ENCODE measurements at regions of chr18 and their contacts with region 1.

Region 1: DNA sequence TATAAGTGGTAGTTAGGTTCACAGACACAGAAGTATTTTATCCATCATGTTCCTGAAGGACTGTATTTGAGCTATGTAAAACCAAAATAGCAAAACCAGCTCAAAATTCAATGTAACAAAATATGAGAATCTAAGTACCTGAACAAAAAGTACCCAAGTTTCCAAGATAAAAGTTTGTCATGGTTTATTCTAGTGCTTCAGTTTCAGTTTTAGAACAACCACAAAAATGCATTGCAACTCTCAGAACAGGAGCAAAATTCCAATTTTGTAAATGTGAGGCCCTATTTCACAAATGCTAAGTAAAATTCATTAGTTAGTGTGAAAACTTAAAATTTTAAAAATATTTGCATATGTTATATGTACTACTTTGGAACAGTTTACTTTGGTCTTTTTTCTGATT is 5.0 kb upstream of the ALPK2 start:
- DNase-seq: no peak
- H3K4me3 ChIP-seq: no peak overlapping the region
- H3K27ac ChIP-seq: no peak overlapping the region
- H3K4me1 ChIP-seq: peaks cover 27% of the 10 kb centered on the region
- H3K27me3 ChIP-seq: no peaks in the 10 kb centered on the region
- CTCF ChIP-seq: no peak

Region 2: GRCh38 chr18:58590839-58591238 is 43.0 kb before region 1 on chr18:
- CTCF ChIA-PET with region 1: interaction called, 10 read pairs
- POLR2A ChIA-PET with region 1: no interaction called
- intact Hi-C with region 1: no loop called
- DNase-seq: no peak
- H3K4me3 ChIP-seq: no peak overlapping the region
- H3K27ac ChIP-seq: no peak overlapping the region
- H3K4me1 ChIP-seq: no peaks in the 10 kb centered on the region; the same call in 1 of the 2 replicates
- H3K27me3 ChIP-seq: no peaks in the 10 kb centered on the region
- CTCF ChIP-seq: no peak

Measured in PC-9 (cell line).